CD8-positive, alpha-beta T cell (primary cell): ENCODE measurements at regions of chr15 and their contacts with region 1.

Region 1: DNA sequence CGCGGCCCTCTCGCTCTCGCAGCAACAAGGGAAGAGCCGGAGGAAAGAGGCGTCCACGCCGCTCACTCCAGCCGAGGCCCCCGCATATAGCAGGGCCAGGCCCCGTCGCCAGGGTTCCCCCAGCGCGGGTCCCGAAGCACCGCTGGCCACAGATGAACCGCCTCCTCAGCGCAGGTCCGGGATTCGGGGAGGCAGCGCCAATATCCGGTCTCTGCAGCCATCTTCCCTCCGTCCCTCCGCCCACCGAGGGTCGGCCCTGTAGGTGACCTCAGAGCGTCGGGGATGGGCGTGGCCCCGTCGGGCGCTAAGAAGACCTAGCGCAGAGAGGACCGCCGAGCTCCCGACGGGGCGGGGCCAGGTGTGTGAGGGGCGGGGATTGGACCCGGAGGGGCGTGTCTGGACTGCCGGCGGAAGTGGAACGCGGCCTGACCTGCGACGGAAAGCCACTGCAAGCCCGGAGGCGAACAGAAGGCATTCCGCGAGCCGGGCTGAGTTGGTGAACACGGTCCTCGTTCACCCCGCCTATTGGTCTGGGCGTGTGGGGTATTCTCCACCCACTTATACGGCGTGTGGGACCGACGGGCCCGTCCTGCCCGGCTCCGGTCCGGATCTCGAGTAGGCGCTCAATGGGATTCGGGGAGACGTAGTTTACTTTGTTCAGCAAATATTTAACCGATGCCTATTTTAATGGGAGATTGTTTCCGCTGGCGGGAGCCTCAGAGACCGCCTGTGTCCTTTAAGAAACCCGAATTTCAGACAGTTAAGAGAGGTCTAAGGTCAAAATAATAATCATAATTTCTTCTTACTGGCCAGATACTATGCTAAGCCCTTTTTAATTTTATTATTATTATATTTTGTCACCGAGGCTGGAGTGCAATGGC is 26.9 kb upstream of the MTHFS start:
- DNase-seq: peak; percentile 95 to 100 (median 99)
- ATAC-seq: peak; percentile 93
- H3K4me3 ChIP-seq: peak overlapping the region; percentile 76 to 85
- H3K4me3 Mint-ChIP-seq: peak overlapping the region; percentile 91
- H3K27ac ChIP-seq: peak overlapping the region; percentile 90 to 94
- H3K27ac Mint-ChIP-seq: peak overlapping the region; percentile 93
- H3K4me1 ChIP-seq: peaks cover 11% of the 10 kb centered on the region
- H3K4me1 Mint-ChIP-seq: peaks cover 15% of the 10 kb centered on the region
- H3K27me3 ChIP-seq: no peaks in the 10 kb centered on the region
- H3K27me3 Mint-ChIP-seq: no peaks in the 10 kb centered on the region
- CTCF ChIP-seq: no peak

Region 2: DNA sequence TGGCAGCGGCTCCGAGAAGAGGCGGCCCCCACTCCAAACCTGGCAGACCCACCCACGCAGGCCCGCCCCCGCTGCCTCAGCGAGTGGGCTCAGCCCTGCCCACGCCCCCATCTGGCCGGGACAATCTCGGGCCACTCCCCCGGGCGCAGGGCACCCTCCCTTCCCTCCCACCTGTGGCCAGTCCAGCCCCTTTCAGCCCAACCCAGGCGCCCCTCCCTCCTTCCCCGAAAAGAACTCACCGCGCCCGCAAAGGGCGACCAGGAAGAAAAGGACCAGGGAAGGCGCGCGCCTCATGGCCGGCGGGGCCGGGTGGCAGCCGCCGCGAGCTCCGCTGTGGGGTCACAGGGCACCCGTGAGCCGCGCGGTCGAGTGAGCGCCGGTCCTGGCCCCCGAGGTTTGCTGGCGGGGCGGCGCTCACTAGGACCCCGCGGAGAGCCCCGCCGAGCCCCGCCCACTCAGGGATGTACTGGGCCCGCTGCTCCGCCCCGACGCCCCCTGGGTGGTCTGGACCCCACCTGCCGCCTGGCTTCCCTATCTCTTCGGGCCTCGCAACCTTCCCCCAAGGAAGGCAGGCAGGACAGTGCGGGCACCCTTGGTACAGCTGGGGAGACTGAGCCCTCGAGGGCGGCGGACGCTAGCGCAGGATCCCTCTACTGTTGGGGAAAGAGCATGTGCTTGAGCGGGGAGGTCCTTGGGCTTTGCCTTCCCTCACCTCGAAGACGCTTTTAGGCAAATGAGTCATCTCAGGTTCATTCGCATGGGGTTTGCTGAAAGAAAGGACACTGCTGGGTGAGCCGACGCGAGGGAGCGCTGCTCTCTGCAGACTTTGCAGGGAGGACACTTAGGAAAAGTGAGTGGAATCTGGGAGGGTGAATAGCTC is 1282.7 kb before region 1 on chr15 and contains the start of gene CHRNB4:
- CTCF ChIA-PET with region 1: no interaction called
- POLR2A ChIA-PET with region 1: no interaction called
- intact Hi-C with region 1: no loop called
- DNase-seq: peak in 3 of 9 experiments; percentile 23 to 42 (median 34)
- ATAC-seq: peak; percentile 75
- H3K4me3 ChIP-seq: peak within 1 kb of the TSS; percentile 33
- H3K4me3 Mint-ChIP-seq: peak within 1 kb of the TSS; percentile 72
- H3K27ac ChIP-seq: no peak within 1 kb of the TSS
- H3K27ac Mint-ChIP-seq: no peak within 1 kb of the TSS
- H3K4me1 ChIP-seq: peaks cover 13% of the 10 kb centered on the region
- H3K4me1 Mint-ChIP-seq: peaks cover 8% of the 10 kb centered on the region
- H3K27me3 ChIP-seq: peaks cover 0 to 7% of the 10 kb centered on the region in 2 experiments
- H3K27me3 Mint-ChIP-seq: peaks cover 12% of the 10 kb centered on the region
- CTCF ChIP-seq: no peak
- total RNA-seq, gene CHRNB4: not detected

Region 3: GRCh38 chr15:79265167-79265566 is 658.6 kb before region 1 on chr15:
- CTCF ChIA-PET with region 1: no interaction called
- POLR2A ChIA-PET with region 1: no interaction called
- intact Hi-C with region 1: no loop called
- DNase-seq: no peak
- ATAC-seq: no peak
- H3K4me3 ChIP-seq: no peak overlapping the region
- H3K4me3 Mint-ChIP-seq: no peak overlapping the region
- H3K27ac ChIP-seq: no peak overlapping the region
- H3K27ac Mint-ChIP-seq: no peak overlapping the region
- H3K4me1 ChIP-seq: no peaks in the 10 kb centered on the region
- H3K4me1 Mint-ChIP-seq: no peaks in the 10 kb centered on the region
- H3K27me3 ChIP-seq: peaks cover 0 to 4% of the 10 kb centered on the region in 2 experiments
- H3K27me3 Mint-ChIP-seq: peaks cover 36% of the 10 kb centered on the region
- CTCF ChIP-seq: no peak

Region 4: DNA sequence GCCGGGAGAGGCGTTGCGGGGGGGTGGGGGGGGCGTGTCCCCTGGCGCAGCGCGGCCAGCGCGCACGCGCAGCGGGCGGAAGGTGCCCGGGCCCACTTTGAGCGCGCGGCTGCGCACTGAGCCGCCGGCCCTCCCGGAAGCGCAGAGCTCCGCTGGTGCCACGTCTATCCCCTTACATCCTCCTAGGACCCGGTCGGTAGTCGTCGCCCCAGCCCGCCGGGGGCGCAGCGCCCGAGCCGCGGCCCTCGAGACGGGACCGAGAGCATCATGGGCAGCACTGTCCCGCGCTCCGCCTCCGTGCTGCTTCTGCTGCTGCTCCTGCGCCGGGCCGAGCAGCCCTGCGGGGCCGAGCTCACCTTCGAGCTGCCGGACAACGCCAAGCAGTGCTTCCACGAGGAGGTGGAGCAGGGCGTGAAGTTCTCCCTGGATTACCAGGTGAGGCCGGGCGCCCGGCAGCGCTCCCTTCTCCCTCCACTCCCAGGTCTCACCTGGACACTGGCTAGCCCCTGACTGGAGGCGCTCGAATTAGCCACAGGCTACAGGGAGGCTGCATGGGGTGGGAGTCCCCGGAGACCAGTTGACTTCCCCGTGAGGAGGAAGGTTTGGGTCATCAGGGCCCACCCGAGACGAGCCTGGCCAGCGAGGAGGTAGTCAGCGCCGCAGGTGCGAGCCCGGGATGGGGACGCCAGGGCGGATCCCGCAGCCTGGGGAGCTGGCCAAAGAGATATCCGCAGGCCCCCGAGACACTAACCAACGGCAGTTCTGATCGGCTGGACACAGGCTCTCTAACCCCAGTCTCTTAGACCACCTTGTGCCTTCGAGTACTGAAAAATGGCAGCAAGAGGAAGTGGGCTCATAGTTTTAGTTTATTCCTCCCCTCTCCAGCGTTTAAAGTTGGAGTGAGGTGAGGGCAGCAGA is 612.5 kb before region 1 on chr15 and contains the start of gene TMED3:
- CTCF ChIA-PET with region 1: no interaction called
- POLR2A ChIA-PET with region 1: no interaction called
- intact Hi-C with region 1: loop called in 1 of 2 experiments (anchors 10 kb)
- DNase-seq: peak; percentile 56 to 92 (median 75)
- ATAC-seq: peak; percentile 95
- H3K4me3 ChIP-seq: peak within 1 kb of the TSS; percentile 83 to 88
- H3K4me3 Mint-ChIP-seq: peak within 1 kb of the TSS; percentile 89
- H3K27ac ChIP-seq: peak within 1 kb of the TSS in 1 of 2 experiments; percentile 47
- H3K27ac Mint-ChIP-seq: peak within 1 kb of the TSS; percentile 22
- H3K4me1 ChIP-seq: peaks cover 19% of the 10 kb centered on the region
- H3K4me1 Mint-ChIP-seq: peaks cover 49% of the 10 kb centered on the region
- H3K27me3 ChIP-seq: no peaks in the 10 kb centered on the region
- H3K27me3 Mint-ChIP-seq: no peaks in the 10 kb centered on the region
- CTCF ChIP-seq: no peak
- total RNA-seq, gene TMED3: 14.2 to 16.0 TPM

Region 5: GRCh38 chr15:79860661-79861060 is 63.1 kb before region 1 on chr15:
- CTCF ChIA-PET with region 1: no interaction called
- POLR2A ChIA-PET with region 1: no interaction called
- intact Hi-C with region 1: no loop called
- DNase-seq: no peak
- ATAC-seq: no peak
- H3K4me3 ChIP-seq: no peak overlapping the region
- H3K4me3 Mint-ChIP-seq: no peak overlapping the region
- H3K27ac ChIP-seq: no peak overlapping the region
- H3K27ac Mint-ChIP-seq: no peak overlapping the region
- H3K4me1 ChIP-seq: no peaks in the 10 kb centered on the region
- H3K4me1 Mint-ChIP-seq: peaks cover 18% of the 10 kb centered on the region
- H3K27me3 ChIP-seq: no peaks in the 10 kb centered on the region
- H3K27me3 Mint-ChIP-seq: no peaks in the 10 kb centered on the region
- CTCF ChIP-seq: no peak

Region 6: DNA sequence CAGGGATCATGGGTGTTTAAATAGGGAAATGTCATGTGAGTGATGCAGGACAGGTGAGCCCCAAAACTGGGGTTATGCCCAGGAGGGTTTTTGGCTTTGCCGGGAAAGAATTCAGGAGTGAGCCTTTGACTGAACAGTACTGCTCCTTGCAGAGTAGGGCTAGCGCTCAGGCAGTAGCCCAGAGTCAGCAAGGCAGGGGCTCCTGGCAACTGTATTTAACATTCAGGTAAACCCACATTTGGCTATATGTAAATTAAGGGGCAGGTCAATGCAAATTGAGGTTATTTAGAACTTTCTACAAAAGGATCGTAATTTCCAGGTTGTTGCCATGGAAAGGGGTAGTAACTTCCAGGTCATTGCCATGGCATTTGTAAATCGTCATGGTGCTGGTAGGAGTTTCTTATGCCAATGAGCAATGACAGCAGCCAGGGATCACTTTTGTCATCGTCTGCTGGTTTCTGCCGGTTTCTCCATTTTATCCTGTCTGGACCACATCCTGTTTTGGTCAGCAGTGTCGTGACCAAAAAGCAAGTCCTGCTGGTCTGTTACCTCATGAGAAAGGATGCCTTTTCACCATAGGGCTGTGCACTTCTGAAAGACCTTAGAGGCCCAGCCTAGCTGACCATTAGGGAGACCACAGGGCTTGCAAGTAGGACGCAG is 51.3 kb before region 1 on chr15:
- CTCF ChIA-PET with region 1: no interaction called
- POLR2A ChIA-PET with region 1: interaction called, 3 read pairs
- intact Hi-C with region 1: loop called in 1 of 2 experiments (anchors 10 kb)
- DNase-seq: peak in 7 of 9 experiments; percentile 10 to 75 (median 32)
- ATAC-seq: peak; percentile 84
- H3K4me3 ChIP-seq: no peak overlapping the region
- H3K4me3 Mint-ChIP-seq: no peak overlapping the region
- H3K27ac ChIP-seq: no peak overlapping the region
- H3K27ac Mint-ChIP-seq: peak overlapping the region; percentile 78
- H3K4me1 ChIP-seq: peaks cover 11% of the 10 kb centered on the region
- H3K4me1 Mint-ChIP-seq: peaks cover 32% of the 10 kb centered on the region
- H3K27me3 ChIP-seq: no peaks in the 10 kb centered on the region
- H3K27me3 Mint-ChIP-seq: no peaks in the 10 kb centered on the region
- CTCF ChIP-seq: no peak

Region 7: GRCh38 chr15:79896637-79897379 is 26.9 kb before region 1 on chr15 and contains the start of gene MTHFS:
- CTCF ChIA-PET with region 1: interaction called, 4 read pairs
- POLR2A ChIA-PET with region 1: interaction called, 78 read pairs
- intact Hi-C with region 1: loop called (anchors 1 kb)
- DNase-seq: peak; percentile 61 to 91 (median 79)
- ATAC-seq: peak; percentile 84
- H3K4me3 ChIP-seq: peak within 1 kb of the TSS; percentile 75 to 96
- H3K4me3 Mint-ChIP-seq: peak within 1 kb of the TSS; percentile 96
- H3K27ac ChIP-seq: peak within 1 kb of the TSS; percentile 94 to 95
- H3K27ac Mint-ChIP-seq: peak within 1 kb of the TSS; percentile 100
- H3K4me1 ChIP-seq: peaks cover 28% of the 10 kb centered on the region
- H3K4me1 Mint-ChIP-seq: peaks cover 40% of the 10 kb centered on the region
- H3K27me3 ChIP-seq: no peaks in the 10 kb centered on the region
- H3K27me3 Mint-ChIP-seq: no peaks in the 10 kb centered on the region
- CTCF ChIP-seq: peak; percentile 36
- total RNA-seq, gene MTHFS: 5.1 to 7.8 TPM

Region 8: DNA sequence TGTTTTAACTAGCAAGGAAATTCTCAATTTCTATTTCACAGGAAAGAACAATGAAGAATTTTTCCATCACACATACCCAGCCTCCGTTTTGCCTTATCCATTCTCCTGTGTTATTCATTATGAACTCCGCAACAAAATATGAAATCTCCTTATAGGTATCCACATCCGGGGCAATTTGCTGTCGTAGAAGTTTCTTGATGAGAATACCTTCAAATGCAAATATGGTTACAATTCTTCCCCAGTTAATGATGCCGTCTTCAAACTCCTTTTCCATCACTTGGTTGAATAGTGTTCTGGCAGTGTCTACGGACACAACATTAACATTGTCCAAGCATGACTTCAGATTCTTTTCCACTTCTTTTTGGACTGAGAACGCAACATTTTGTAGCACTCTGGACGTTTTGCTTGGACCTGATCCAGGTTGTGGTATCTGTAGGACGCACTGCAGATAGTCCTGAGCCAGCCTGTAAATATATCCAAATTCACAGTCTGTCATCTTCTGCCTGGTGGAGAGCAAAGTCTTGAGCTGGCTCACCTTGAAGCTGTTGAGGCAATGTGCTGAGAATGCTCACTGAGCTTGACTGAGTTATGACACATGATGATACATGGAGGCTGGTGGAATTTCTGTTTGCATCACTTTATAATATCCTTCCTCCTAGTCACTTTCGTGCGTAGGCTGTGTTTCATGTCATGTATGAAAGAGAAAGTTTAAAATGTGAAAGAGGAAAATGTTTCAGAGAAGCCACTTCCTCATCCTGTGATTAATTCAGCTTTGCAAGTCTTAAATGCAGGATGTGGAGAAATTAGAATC is 47.1 kb after region 1 on chr15 and contains the start of gene BCL2A1:
- CTCF ChIA-PET with region 1: interaction called, 7 read pairs
- POLR2A ChIA-PET with region 1: interaction called, 31 read pairs
- intact Hi-C with region 1: loop called (anchors 1 kb)
- DNase-seq: peak in 8 of 9 experiments; percentile 7 to 86 (median 55)
- ATAC-seq: peak; percentile 85
- H3K4me3 ChIP-seq: peak within 1 kb of the TSS; percentile 59 to 68
- H3K4me3 Mint-ChIP-seq: peak within 1 kb of the TSS; percentile 92
- H3K27ac ChIP-seq: peak within 1 kb of the TSS; percentile 73 to 76
- H3K27ac Mint-ChIP-seq: peak within 1 kb of the TSS; percentile 96
- H3K4me1 ChIP-seq: peaks cover 40% of the 10 kb centered on the region
- H3K4me1 Mint-ChIP-seq: peaks cover 57% of the 10 kb centered on the region
- H3K27me3 ChIP-seq: no peaks in the 10 kb centered on the region
- H3K27me3 Mint-ChIP-seq: no peaks in the 10 kb centered on the region
- CTCF ChIP-seq: no peak
- total RNA-seq, gene BCL2A1: 24.5 to 27.1 TPM